ENCODE measurements at regions of chr15 and their contacts with region 1.

Region 1: GRCh38 chr15:39782441-39783138 is at the start of gene FSIP1:
- ATAC-seq: peak; percentile 92 to 96 (median 94)
- H3K4me3 ChIP-seq: peak within 1 kb of the TSS; percentile 61 to 90 (median 65)
- H3K27ac ChIP-seq: peak within 1 kb of the TSS; percentile 78 to 90
- H3K4me1 ChIP-seq: peaks cover 36 to 39% of the 10 kb centered on the region in 2 donors
- total RNA-seq, gene FSIP1: 0.77 to 10.0 (median 3.5) TPM

Region 2: GRCh38 chr15:39686000-39686613 is 96.5 kb before region 1 on chr15:
- in situ Hi-C with region 1: no loop called
- ATAC-seq: peak; percentile 50 to 83 (median 70)
- H3K4me3 ChIP-seq: no peak overlapping the region
- H3K27ac ChIP-seq: no peak overlapping the region
- H3K4me1 ChIP-seq: peaks cover 0 to 7% of the 10 kb centered on the region in 2 donors

Region 3: GRCh38 chr15:39736412-39737197 is 46.0 kb before region 1 on chr15:
- in situ Hi-C with region 1: no loop called
- ATAC-seq: peak in 2 of 8 experiments; percentile 12 to 52
- H3K4me3 ChIP-seq: no peak overlapping the region
- H3K27ac ChIP-seq: no peak overlapping the region
- H3K4me1 ChIP-seq: no peaks in the 10 kb centered on the region

Region 4: GRCh38 chr15:39920510-39921273 is 138.1 kb after region 1 on chr15:
- in situ Hi-C with region 1: loop called in 1 of 9 experiments (anchors 25 kb)
- ATAC-seq: peak; percentile 67 to 83 (median 80)
- H3K4me3 ChIP-seq: peak overlapping the region; percentile 37 to 45 (median 40)
- H3K27ac ChIP-seq: peak overlapping the region; percentile 37 to 38
- H3K4me1 ChIP-seq: peaks cover 0 to 3% of the 10 kb centered on the region in 2 donors

Region 5: GRCh38 chr15:39961051-39961450 is 178.5 kb after region 1 on chr15:
- in situ Hi-C with region 1: loop called in 2 of 9 experiments (anchors 25 kb)
- ATAC-seq: no peak
- H3K4me3 ChIP-seq: no peak overlapping the region
- H3K27ac ChIP-seq: no peak overlapping the region
- H3K4me1 ChIP-seq: no peaks in the 10 kb centered on the region

Region 6: DNA sequence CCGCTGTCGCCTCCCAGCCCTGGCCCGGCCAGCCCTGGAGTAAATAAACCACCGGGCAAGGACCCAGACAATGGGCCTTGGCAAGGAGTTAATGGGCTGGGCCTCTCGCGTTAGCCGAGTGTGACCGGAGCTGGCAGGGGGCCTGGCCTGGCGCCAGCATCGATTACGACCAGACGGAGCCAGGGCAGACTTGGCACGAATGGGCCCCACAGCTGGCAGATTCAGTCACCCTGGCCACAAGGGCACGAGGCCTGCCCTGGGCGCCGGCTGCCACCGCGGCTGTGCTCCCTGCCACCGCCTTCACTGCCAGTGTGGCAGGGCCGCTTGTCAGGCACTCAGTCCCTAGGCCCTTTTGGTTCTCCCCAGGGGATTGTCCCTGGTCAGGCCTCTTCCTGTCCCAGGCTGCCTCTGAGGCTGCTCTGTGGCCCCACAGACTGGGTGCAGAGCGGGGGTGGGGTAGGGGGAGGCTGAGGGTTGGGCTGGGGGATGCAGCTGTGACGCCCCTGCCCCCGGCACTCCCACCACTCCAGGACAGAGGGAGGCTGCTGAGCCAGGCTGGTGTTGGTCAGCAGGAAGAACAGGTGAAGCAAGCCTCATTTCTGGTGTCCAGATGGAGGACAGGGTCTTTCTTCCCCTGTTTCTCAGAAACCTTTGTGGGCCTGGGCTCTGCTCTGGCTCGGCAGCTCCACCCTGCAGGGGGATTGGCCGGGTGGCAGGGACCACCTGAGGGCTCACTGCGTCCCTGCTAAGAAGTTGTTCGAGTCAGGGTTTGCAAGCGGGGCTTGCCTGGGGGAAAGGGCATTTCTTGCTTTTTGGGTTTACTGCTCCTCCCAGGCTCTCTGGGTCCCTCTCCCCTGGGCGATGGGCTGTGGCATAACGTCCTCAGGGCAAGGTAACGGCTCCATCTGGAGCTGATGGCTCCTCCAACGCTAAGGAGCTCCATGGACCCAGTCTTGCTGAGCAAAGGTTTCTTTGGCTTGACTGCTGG is 286.9 kb after region 1 on chr15:
- in situ Hi-C with region 1: no loop called
- ATAC-seq: peak; percentile 72 to 94 (median 92)
- H3K4me3 ChIP-seq: no peak overlapping the region
- H3K27ac ChIP-seq: peak overlapping the region in 1 of 2 donors; percentile 16
- H3K4me1 ChIP-seq: peaks cover 12 to 17% of the 10 kb centered on the region in 2 donors

Measured in motor neuron (in vitro differentiated cells).